Mucosa of descending colon (tissue), 3 donors: ENCODE measurements at regions of chr2 and their contacts with region 1.

Region 1: DNA sequence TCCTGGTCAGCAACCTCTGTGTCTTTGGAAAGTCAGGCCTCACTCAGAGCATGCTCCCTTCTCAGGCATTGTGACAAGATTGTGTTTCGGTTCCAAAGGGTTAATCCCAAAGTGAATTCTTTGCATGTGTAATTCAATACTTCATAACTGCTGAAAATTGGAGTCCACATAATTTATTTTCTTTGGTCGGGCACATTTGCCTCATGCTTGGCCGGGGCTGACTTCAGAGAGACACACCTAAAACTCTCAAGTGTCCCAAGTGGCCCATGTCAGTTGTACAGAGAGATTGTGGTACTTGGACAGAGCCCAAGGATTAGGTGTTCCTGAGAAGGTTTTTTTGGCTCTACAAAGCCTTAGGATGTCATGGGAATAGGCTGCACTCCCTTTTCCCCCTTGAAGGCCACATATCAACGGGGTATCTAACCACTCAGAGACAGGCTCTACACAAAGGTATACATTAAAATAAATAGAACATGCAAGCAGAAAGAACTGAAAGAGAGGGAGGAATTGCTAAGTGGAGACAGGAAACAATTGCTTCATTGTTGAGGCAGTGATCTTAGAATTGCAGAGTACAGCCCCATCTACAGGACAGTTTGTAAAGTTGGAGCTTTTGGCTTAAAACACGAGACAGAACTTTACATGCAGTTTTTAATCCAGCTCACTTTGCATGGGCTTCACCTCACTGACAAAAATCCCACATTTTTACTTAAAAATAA is 1232.3 kb upstream of the ZEB2 start:
- DNase-seq: no peak
- ATAC-seq: peak; percentile 69
- H3K4me3 ChIP-seq: no peak overlapping the region
- H3K4me1 ChIP-seq: no peaks in the 10 kb centered on the region
- CTCF ChIP-seq: peak; percentile 14

Region 2: GRCh38 chr2:144519934-144520731 is 1232.1 kb before region 1 on chr2 and contains the start of gene ZEB2:
- intact Hi-C with region 1: loop called in 1 of 2 experiments (anchors 10 kb)
- DNase-seq: peak in 2 of 3 donors; percentile 52 to 54
- ATAC-seq: peak; percentile 40
- H3K4me3 ChIP-seq: peak within 1 kb of the TSS; percentile 17
- H3K4me1 ChIP-seq: no peaks in the 10 kb centered on the region
- CTCF ChIP-seq: peak; percentile 18
- total RNA-seq, gene ZEB2: 19.0 to 80.1 (median 48.6) TPM